ENCODE measurements at regions of chr6 and their contacts with region 1.

Region 1: GRCh38 chr6:110389689-110390382 is 25.5 kb downstream of the DDO start:
- DNase-seq: no peak
- H3K4me3 Mint-ChIP-seq: no peak overlapping the region
- H3K27ac Mint-ChIP-seq: no peak overlapping the region
- H3K4me1 Mint-ChIP-seq: peaks cover 5% of the 10 kb centered on the region
- H3K27me3 Mint-ChIP-seq: peaks cover 2% of the 10 kb centered on the region

Region 2: GRCh38 chr6:109526905-109527628 is 862.8 kb before region 1 on chr6:
- intact Hi-C with region 1: loop called (anchors 2 kb)
- DNase-seq: peak; percentile 89
- H3K4me3 Mint-ChIP-seq: no peak overlapping the region
- H3K27ac Mint-ChIP-seq: no peak overlapping the region
- H3K4me1 Mint-ChIP-seq: peaks cover 4% of the 10 kb centered on the region
- H3K27me3 Mint-ChIP-seq: peaks cover 8% of the 10 kb centered on the region

Region 3: DNA sequence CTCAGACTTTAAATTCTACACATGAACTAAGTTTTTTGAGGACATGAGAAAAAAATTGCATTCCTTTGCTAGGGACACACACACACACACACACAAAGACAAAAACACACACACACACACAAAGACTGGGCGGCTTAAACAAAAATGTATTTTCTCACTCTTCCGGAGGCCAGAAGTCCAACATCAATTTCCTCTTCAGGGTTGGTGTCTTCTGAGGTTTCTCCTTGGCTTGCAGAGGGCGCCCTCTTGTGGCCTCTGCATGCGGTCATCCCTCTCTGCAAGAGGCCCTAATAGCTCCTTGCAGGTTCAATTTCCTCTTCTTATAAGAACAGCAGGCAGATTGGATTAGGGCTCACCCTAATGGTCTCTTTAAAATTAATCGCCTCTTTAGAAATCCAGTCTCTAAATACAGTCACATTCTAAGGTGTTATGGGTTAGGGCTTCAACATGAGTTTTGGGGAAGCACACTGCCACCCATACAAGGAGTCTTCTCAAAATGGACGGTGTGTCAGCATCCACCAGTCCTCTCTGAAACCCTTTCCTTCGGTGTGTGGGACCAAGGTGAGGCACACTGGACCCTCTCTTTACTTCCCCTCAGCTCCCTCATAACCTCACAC is 350.4 kb before region 1 on chr6:
- intact Hi-C with region 1: loop called (anchors 2 kb)
- DNase-seq: peak; percentile 94
- H3K4me3 Mint-ChIP-seq: peak overlapping the region; percentile 82
- H3K27ac Mint-ChIP-seq: peak overlapping the region; percentile 84
- H3K4me1 Mint-ChIP-seq: peaks cover 14% of the 10 kb centered on the region
- H3K27me3 Mint-ChIP-seq: peaks cover 1% of the 10 kb centered on the region

Region 4: DNA sequence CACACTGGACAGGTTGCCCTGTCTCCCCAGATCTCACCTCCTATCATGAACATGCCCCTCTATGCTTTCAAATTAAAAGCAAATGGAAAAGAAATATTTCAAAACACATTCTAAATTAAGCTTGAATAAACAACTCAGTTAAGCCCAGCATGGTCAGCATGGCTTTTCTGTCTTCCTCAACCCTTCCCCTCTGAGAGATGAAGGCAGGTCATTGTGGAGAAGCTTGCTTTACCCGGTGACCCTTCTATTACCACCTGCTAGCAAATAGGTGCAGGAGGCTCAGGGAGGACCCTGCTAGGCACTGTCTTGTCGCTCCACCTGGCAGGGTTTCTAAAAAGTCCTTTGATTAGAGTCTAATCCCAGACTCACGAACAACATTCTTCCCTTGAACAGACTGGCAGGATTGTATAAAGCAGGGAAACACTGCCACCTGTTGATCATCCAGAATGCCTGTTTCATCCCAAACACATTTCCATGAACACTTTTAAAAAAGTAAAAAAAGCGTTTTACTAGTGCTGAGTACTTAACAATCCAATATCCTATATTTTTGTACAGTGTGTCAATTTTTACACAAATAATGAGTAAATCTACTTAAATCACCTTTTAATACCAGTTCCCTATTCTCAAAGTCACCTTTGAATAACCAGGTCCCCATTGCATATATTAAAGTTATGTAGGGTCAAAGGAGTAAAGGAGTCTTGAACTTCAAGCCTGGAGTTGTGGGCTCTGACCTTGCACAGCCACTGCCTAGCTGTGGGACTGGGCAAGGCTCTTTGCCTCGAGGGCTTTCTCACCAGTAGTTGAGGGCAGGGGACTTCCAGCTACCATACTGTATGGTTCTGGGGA is 336.2 kb before region 1 on chr6:
- intact Hi-C with region 1: loop called (anchors 5 kb)
- DNase-seq: peak; percentile 65
- H3K4me3 Mint-ChIP-seq: no peak overlapping the region
- H3K27ac Mint-ChIP-seq: no peak overlapping the region
- H3K4me1 Mint-ChIP-seq: no peaks in the 10 kb centered on the region
- H3K27me3 Mint-ChIP-seq: peaks cover 28% of the 10 kb centered on the region

Region 5: GRCh38 chr6:110179401-110180227 is 210.2 kb before region 1 on chr6 and contains the start of gene WASF1:
- intact Hi-C with region 1: loop called (anchors 1 kb)
- DNase-seq: peak; percentile 97
- H3K4me3 Mint-ChIP-seq: peak within 1 kb of the TSS; percentile 81
- H3K27ac Mint-ChIP-seq: peak within 1 kb of the TSS; percentile 60
- H3K4me1 Mint-ChIP-seq: peaks cover 5% of the 10 kb centered on the region
- H3K27me3 Mint-ChIP-seq: peaks cover 19% of the 10 kb centered on the region
- total RNA-seq, gene WASF1: 1.2 and 2.2 TPM in 2 replicates

Region 6: DNA sequence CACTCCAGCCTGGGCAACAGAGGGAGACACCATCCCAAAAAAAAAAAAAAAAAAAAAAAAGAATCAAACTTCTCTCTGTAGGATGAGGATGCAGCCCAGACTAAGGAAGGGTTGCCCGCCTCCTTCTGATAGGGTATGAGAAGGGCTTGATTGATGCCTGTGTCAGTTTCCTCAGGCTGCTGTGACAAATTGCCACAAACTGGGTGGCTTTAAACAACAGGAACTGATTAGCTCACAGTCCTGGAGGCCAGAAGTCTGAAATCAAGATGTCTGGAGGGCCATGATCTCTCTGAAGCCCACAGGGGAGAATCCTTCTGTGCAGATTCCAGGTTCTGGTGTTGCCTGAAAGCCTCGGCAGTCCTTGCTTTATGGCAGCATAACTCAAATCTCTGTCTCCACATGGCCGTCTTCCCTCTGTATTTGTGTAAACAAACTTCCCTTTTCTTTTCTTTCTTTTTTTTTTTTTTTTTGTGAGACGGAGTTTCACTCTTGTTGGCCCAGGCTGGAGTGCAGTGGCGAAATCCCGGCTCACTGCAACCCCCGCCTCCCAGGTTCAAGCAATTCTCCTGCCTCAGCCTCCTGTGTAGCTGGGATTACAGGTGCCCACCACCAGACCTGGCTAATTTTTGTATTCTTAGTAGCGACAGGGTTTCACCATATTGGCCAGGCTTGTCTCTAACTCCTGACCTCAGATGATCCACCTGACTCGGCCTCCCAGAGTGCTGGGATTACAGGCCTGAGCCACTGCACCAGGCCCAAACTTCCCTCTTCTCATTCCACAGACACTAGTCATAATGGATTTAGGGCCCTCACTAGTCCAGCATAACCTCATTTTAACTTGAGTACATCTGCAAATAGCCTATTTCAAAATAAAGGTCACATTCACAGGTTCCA is 436.6 kb after region 1 on chr6:
- intact Hi-C with region 1: no loop called
- DNase-seq: no peak
- H3K4me3 Mint-ChIP-seq: no peak overlapping the region
- H3K27ac Mint-ChIP-seq: no peak overlapping the region
- H3K4me1 Mint-ChIP-seq: peaks cover 12% of the 10 kb centered on the region
- H3K27me3 Mint-ChIP-seq: peaks cover 12% of the 10 kb centered on the region

Measured in activated CD4-positive, alpha-beta T cell treated with anti-CD3 and anti-CD28 coated beads, Interleukin-2, amount 10 ng/mL, durations not matched to agents 24 days and 14 days (primary cell).